Left ventricle myocardium superior (tissue), 1 donor: ENCODE measurements at regions of chr6 and their contacts with region 1.

Region 1: DNA sequence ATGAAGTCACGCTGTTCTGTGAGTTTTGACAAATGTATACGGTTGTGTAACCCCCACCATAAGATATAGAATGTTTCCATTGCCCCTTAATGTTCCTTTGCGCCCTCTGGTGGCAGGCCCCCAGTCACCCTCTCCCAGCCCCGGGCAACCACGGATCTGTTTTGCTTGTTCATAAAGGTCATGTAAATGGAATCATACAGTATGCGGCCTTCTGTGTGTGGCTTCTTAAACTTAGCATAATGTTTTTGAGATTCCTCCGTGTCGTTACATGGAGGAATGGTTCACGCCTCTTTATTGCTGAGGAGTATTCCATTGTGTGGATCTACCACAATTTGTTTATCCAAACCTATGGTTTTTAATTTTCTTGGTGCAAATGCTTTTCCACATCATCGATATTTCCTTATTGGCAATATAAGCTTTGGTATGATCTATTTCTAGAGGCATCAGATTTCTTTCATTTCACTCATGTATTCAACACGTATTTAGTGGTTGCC is 28.4 kb downstream of the LYRM2 start:
- DNase-seq: peak; percentile 82
- ATAC-seq: peak; percentile 83

Region 2: DNA sequence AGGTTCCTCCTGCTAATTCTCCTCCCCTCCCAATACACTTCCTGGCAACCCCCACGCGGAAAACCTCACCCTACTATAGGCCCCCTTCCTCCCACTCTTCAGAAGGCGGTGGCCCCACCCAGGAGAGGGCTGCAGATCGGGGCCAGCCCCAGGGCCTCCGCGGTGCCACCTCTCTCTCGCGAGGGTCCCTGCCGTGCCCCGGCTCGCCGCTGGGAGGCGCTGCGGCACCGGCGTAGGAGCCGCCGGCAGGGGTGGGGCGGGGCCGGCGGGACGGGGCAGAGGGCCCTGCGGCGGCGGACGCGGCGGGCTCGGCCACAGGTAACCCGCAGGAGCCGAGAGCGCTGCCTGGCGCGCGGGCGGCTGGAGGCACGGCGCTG is 177.3 kb before region 1 on chr6 and contains the start of gene ANKRD6:
- intact Hi-C with region 1: loop called (anchors 5 kb)
- DNase-seq: peak; percentile 93
- ATAC-seq: peak; percentile 98
- total RNA-seq, gene ANKRD6: 21.4 TPM